ENCODE measurements at regions of chrX and their contacts with region 1.

Region 1: DNA sequence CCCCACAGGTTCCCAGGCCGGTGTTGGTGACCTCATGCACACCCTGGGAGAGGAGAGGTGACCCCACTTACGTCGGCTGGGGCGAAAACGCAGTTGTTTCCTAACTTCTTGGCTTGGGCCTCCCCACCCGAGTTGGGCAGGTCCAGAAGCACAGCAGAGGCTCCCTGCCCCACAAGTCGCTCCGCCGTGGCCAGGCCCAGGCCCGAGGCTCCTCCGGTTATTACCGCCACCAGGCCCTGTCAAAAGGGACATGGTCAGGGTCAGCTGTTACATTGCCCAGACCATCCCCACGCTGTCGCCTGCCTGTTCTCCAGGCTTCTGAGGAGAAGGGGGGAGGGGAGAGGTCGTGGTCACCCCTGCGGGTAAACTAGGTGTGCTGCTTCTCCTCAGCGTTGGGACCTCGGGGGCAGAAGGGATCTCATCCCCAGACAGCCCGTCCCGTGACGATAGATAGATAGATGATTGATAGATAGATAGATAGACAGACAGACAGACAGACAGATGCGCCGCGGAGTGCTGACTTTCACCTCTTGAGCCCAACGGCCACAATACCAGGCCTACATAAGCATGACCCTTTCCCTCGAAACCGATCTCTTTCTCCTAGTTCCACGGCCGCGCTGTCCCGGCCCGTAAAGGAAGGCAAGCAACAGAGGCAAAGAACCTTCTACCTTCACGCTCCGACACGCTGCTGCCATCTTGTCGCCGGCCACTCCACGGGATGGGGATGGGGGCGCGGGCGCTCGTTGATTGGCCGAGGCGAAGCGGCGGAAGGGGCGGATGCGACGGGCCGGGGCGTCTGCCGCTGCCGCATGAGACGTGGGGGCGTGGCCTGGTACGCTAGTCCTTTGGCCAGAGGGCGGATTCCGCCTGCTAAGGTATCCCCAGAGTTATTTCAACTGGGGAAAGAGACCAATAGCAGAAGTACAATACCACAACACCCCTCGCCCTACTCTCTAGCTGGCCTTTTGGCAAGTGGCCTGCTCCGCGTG is at the start of gene HSD17B10:
- DNase-seq: peak; percentile 84 to 85
- ATAC-seq: peak; percentile 96 to 99
- H3K4me3 ChIP-seq: peak within 1 kb of the TSS; percentile 95
- H3K27ac ChIP-seq: peak within 1 kb of the TSS; percentile 89 to 92
- H3K4me1 ChIP-seq: peaks cover 5% of the 10 kb centered on the region; the same call in 1 of the 3 replicates
- CTCF ChIP-seq: no peak
- EP300 ChIP-seq: no peak
- POLR2A ChIP-seq: peak; percentile 81
- RAD21 ChIP-seq: no peak
- polyA plus RNA-seq, gene HSD17B10: 139 and 155 TPM in 2 replicates

Region 2: GRCh38 chrX:53422086-53422860 is 11.7 kb before region 1 on chrX and contains the start of gene SMC1A:
- CTCF ChIA-PET with region 1: interaction called, 18 read pairs
- POLR2A ChIA-PET with region 1: interaction called, 5 read pairs
- DNase-seq: peak; percentile 97 to 98
- ATAC-seq: peak; percentile 91 to 95
- H3K4me3 ChIP-seq: peak within 1 kb of the TSS; percentile 65
- H3K27ac ChIP-seq: peak within 1 kb of the TSS; percentile 87 to 94
- H3K4me1 ChIP-seq: peaks cover 13% of the 10 kb centered on the region; the same call in 1 of the 3 replicates
- CTCF ChIP-seq: no peak
- EP300 ChIP-seq: no peak
- POLR2A ChIP-seq: peak; percentile 71
- RAD21 ChIP-seq: no peak
- polyA plus RNA-seq, gene SMC1A: 85.4 and 100 TPM in 2 replicates

Region 3: DNA sequence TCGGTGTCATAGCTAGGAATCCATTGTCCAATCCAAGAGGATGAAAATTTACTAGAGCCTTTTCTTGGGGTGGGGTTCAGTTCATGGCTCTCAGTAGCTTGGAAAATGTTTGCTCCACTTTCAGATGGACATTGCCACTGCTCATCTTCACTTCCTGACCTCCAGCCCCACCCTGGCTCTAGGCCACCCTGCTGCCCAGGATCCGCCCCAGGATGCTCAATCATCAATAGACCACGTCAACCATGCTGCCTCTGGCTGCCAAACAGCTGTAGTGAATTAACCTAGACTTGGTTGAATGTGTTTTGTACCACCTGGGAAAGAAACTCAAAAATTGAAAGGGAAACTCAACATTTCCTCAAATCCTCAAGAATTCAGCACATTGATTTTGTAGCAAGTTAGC is 37.4 kb after region 1 on chrX:
- CTCF ChIA-PET with region 1: no interaction called
- POLR2A ChIA-PET with region 1: no interaction called
- DNase-seq: no peak
- ATAC-seq: no peak
- H3K4me3 ChIP-seq: no peak overlapping the region
- H3K27ac ChIP-seq: no peak overlapping the region
- H3K4me1 ChIP-seq: no peaks in the 10 kb centered on the region
- CTCF ChIP-seq: no peak
- EP300 ChIP-seq: no peak
- POLR2A ChIP-seq: no peak
- RAD21 ChIP-seq: no peak